ENCODE measurements at regions of chr18 and their contacts with region 1.

Region 1: DNA sequence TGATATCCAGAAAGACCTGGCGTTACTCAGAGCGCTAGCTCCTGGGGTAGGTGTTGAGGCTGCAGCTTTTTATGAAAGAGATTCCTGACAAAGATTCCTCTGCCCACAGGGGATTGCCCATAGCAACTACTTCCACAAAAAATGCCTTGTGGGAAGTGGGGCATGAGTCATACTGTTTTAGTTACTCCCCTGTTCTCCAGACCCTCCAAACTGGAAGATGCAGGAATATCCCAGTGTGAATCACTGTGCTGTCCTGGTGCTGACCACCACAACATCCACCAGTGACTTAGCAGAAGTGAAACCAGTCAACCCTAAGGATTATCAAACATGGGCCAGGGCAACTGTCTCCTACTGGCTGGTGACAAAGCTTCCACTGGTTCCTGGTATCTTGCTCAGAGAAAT is 61.8 kb downstream of the CDH2 start:
- DNase-seq: peak; percentile 59
- H3K4me3 Mint-ChIP-seq: no peak overlapping the region
- H3K27ac Mint-ChIP-seq: peak overlapping the region; percentile 23
- H3K4me1 Mint-ChIP-seq: peaks cover 24% of the 10 kb centered on the region
- H3K27me3 Mint-ChIP-seq: no peaks in the 10 kb centered on the region
- CTCF ChIP-seq: no peak

Region 2: DNA sequence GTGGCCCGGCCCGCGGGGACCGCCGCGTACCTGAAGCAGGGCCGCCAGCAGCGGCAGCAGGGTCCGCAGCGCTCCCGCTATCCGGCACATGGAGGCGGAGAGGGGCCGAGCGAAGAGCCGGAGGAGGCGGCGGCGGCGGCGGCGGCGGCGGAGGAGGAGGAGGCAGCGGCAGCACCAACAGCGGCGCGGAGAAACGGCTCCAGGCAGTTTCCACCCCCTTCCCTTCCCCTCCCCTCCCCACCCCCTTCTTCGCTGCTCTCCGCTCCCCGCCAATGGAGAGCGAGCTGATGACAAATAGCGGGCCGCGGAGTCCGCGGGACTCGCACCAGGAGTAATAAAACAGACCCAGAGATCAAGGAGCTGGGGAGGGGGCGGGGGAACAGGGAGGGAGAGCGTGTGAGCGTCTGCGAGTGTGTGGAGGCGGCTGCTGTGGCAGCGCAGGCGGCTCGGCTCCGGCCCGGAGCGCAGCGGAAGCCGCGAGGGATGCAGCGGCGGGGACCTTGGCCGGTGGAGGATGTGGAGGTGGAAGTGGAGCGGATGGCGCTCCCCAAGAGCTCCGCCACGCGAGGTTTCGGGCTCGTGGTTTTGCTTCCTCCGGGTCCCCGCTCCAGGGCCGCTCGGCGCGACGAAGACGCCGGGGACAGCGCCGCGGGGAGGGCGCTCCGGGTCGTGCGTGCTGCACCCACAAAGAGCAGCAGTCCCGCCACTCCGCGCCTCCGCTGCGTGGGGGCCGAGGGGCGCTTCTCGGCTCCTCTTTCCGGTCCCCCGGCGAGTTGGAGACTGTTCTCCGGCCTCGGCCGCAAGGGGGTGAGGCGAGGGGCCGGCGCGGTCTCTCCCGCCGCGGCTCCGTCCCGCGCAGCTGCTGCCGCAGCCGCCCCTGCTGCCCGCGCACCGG is 62.0 kb after region 1 on chr18 and contains the start of gene CDH2:
- CTCF ChIA-PET with region 1: no interaction called
- POLR2A ChIA-PET with region 1: no interaction called
- intact Hi-C with region 1: loop called (anchors 2 kb)
- DNase-seq: peak; percentile 74
- H3K4me3 Mint-ChIP-seq: peak within 1 kb of the TSS; percentile 84
- H3K27ac Mint-ChIP-seq: peak within 1 kb of the TSS; percentile 10
- H3K4me1 Mint-ChIP-seq: peaks cover 6% of the 10 kb centered on the region
- H3K27me3 Mint-ChIP-seq: no peaks in the 10 kb centered on the region
- CTCF ChIP-seq: no peak
- total RNA-seq, gene CDH2: 14.6 and 15.1 TPM in 2 replicates

Region 3: DNA sequence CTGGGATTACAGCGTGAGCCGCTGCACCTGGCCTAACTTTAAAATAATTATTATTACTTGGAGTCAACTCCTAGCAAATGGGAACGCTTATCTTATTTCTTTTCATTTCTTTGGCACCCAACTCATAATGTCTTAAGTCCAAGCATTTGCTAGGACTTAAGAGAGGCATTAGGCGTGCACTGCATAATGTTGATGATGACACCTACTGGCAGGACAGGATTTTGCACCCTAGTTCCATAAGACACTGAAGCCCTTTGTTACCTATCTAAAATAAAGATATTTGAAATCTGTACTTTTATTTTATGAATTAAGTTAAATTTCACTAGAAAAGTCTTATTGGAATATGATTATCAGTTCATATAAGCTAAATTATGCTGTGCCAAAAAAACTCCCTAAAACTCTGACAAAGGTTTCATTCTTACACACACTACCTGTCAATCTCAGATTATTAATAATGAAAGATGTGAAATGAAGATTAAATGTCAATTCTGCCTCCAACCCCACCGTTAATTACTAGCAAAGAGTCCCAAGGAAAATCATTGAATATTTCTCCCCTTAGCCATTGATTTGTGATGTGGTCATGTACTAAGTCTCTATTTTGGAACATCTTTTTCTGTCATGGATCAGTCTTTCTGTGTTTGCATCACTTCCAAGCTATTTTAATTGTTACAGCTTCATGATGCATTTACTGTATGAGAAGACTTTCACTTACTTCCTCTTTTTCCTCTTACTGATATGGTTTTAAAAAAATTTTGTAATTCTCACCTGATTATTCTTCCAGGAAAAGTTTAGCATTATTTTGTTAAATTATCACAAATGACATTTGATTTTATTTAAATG is 74.5 kb after region 1 on chr18:
- CTCF ChIA-PET with region 1: no interaction called
- POLR2A ChIA-PET with region 1: no interaction called
- intact Hi-C with region 1: no loop called
- DNase-seq: peak; percentile 70
- H3K4me3 Mint-ChIP-seq: no peak overlapping the region
- H3K27ac Mint-ChIP-seq: no peak overlapping the region
- H3K4me1 Mint-ChIP-seq: no peaks in the 10 kb centered on the region
- H3K27me3 Mint-ChIP-seq: no peaks in the 10 kb centered on the region
- CTCF ChIP-seq: peak; percentile 60

Measured in MCF 10A (cell line).